HEK293T (cell line): ENCODE measurements at regions of chr15 and their contacts with region 1.

Region 1: DNA sequence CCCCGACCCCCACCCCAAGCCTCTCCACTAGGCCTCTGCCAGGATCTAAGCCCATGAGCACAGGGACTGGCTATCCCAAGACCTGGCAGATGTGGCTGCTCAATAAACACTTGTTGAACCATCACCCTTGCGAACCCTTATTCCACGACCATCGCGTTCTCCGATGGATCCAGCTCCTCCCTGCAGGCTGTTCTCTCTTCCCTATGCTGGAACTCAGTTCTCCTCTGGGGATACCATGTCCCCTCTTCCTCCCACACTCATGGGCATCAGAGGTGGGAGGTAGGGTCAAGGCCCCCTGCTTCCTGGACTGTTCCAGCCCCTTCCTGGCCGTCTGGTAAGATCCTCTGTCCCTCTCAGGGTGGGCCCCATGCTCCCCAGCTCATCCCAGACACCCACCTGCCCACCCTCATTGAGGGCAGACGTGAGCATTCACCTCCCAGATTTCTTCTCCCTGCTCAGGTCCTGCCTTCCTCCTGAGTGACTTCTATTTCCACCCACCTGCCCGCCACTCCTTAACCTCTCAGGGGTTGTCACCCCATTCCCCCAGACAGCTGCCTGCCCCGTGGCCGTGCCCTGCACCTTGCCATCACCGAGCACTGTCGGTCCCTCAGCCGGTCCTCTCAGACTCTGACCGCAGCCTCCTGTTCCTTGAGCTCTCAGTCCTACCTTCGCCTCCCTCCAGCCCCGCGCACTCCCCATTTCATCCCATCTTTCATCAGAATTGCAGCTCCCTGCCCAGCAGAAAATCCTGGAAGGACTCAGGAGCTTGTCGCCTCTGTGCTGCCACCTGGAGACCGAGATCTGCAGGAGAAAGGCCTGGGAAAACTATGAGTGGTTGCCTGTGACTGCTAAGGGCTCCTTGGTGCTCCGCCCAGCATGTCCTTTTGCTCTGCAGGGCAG is 42.0 kb downstream of the PML start:
- DNase-seq: peak; percentile 70

Region 2: GRCh38 chr15:73972984-73973682 is 63.4 kb before region 1 on chr15:
- CTCF ChIA-PET with region 1: interaction called, 53 read pairs
- POLR2A ChIA-PET with region 1: interaction called, 7 read pairs
- DNase-seq: peak; percentile 87

Region 3: DNA sequence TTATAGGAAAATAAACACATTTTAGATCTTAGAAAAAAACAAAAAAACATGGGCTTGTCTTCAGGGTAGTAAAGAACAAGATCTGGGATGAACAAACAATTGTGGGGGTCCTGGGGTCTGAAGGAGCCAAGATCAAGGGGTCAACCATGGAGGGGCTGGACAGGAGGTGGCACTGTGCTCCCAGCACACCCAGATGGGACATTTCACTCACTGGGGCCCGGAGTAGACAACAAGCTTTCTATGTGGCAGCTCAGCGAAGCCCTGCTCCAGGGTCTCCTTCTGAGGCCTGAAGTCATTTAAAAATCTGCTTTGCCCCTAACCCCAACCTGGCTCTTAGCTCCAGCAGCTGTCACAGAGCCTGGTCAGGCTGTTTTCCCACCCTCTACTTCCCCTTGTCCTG is 11.3 kb after region 1 on chr15:
- CTCF ChIA-PET with region 1: interaction called, 19 read pairs
- POLR2A ChIA-PET with region 1: no interaction called
- DNase-seq: no peak

Region 4: GRCh38 chr15:74121039-74121438 is 84.5 kb after region 1 on chr15:
- CTCF ChIA-PET with region 1: no interaction called
- POLR2A ChIA-PET with region 1: no interaction called
- DNase-seq: no peak